Right cardiac atrium (tissue), 5 donors: ENCODE measurements at regions of chr1 and their contacts with region 1.

Region 1: DNA sequence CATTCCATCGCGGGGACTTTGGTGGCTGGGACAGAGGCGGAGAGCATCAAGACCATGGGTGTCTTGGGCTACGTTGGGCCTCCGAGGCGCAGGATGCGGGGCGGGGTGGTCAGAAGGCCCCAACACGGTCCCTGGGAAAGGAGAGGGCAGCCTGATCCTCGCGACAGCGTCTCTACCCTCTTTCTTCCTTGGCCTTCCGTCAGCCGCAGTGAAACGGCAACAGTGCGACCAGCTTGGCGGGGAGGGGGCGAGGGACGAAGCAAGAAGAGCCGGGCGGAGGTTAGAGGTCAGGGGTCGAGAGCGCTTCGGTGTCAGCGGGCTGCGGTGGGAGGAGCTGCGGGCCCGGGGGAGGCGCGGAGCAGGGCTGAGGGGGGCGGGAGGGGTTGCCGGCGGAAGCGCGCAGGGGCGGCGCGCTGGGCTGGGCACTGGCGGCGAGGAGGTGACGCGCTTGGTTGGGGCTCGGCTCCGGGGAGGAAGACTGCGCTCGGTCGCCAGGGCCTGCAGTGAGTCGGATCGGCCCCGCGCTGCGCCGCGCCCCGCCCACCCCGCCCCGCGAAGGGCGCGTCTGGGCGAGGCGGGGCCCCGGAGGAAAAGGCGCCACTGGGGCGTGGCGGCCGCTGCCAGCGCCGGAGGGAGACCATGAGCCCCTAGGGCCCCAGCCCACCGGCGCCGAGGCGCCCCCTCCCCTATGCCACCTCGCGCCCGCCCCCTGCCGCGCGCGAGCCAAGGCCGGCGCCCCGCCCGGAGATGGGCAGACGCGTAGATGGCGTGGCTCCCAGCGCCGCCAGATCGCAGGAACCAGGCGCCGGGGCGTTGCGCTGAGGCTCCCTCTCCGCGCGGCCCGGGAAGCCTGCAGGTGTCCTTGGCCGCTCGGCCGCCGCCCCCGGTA is at the start of gene KCNC4:
- DNase-seq: peak; percentile 93 to 97 (median 97)
- ATAC-seq: peak; percentile 95
- H3K4me3 ChIP-seq: peak within 1 kb of the TSS; percentile 65
- H3K27ac ChIP-seq: peak within 1 kb of the TSS; percentile 81
- H3K4me1 ChIP-seq: peaks cover 4% of the 10 kb centered on the region
- H3K27me3 ChIP-seq: no peaks in the 10 kb centered on the region
- total RNA-seq, gene KCNC4: 6.5 to 8.5 (median 7.0) TPM

Region 2: DNA sequence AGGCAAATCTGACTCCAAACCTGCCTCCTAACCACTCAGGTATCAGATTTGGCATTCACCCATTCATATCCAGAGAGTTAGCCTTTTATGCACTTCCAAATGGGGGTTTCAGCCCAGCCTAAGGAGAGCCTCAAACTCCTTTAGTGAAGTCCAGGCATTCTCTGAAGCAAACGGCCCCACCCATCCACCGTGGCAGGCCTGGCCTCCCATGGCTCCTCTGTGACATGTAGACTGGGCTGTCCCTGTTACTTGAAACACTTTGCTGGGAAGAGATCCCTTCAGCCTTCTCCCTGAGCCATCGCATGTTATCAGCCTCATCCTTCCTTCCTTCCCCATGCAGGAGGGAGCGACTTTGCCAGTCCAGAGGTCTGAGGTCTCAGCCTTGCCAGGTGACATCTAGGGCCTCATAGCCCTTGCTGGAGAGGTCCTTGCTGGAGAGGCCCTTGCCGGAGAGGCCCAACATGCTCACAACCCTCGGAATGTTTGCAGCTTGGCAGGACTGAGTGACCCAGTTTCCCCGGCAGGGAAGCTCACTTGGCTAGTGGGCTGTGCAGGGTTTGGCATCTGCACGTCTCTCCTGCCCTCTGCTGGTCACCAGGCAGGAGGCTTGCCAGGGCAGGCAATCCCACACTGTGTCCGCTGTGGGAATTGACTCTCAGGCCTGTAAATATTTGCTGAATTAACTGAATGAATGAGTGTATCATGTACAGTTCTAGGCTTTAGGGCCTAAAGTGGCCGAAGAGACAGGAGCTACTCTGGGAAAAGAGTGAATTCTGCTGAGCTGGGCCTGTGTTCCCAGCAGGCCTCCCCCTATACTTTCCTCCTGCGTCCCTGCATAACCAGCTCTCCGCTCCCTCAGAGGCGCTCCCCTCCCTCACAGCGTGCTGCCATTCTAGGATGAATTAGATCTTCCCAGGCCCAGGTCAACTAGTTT is 102.5 kb after region 1 on chr1:
- intact Hi-C with region 1: loop called in 3 of 4 experiments (anchors 2 to 5 kb)
- DNase-seq: peak; percentile 83 to 92 (median 91)
- ATAC-seq: peak; percentile 96 to 97
- H3K4me3 ChIP-seq: no peak overlapping the region
- H3K27ac ChIP-seq: no peak overlapping the region
- H3K4me1 ChIP-seq: peaks cover 3% of the 10 kb centered on the region
- H3K27me3 ChIP-seq: no peaks in the 10 kb centered on the region

Region 3: GRCh38 chr1:110407260-110408210 is 197.6 kb after region 1 on chr1 and contains the start of gene LAMTOR5:
- intact Hi-C with region 1: loop called in 1 of 4 experiments (anchors 5 kb)
- DNase-seq: peak; percentile 94 to 97 (median 97)
- ATAC-seq: peak; percentile 96 to 98
- H3K4me3 ChIP-seq: peak within 1 kb of the TSS; percentile 68
- H3K27ac ChIP-seq: peak within 1 kb of the TSS; percentile 80
- H3K4me1 ChIP-seq: no peaks in the 10 kb centered on the region
- H3K27me3 ChIP-seq: no peaks in the 10 kb centered on the region
- total RNA-seq, gene LAMTOR5: 185 to 236 (median 207) TPM

Region 4: DNA sequence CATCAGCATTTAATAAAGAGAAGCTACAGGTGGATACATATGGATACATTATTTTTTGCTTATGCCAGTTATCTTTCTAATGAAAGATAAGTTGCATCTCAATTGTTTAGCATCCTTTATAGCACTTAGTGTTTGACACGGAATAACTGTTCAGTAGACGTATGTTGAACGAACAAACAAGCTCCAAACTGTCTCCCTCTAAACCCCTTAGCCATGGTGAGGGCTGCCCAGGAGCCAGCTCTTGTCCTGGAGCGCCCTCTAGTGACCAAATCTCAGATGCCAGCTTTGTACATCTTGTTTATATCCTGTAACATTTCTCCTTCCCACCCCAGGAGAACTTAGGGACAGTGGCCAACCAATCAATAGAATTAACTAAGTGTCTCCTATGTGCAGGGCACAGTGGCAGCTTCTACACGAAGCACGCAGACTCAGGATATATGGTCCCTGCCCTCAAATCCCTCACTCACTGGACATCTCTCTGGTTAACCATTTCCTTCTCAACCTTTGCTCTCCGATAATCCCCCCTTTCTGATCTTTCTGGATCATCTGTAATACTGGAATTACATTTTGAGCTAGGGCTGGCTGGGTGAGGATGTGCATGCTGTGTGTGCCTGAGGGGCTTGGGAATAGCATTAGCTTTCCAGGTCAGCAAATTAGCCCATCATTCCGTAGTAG is 286.1 kb after region 1 on chr1:
- intact Hi-C with region 1: loop called in 1 of 4 experiments (anchors 10 kb)
- DNase-seq: peak; percentile 72 to 89 (median 79)
- ATAC-seq: peak; percentile 76 to 82
- H3K4me3 ChIP-seq: no peak overlapping the region
- H3K27ac ChIP-seq: no peak overlapping the region
- H3K4me1 ChIP-seq: no peaks in the 10 kb centered on the region
- H3K27me3 ChIP-seq: no peaks in the 10 kb centered on the region